H1 (cell line): ENCODE measurements at regions of chr2 and their contacts with region 1.

Region 1: GRCh38 chr2:42047488-42048298 is at the start of gene PKDCC:
- DNase-seq: peak in 1 of 2 experiments; percentile 88
- H3K4me3 ChIP-seq: peak within 1 kb of the TSS; percentile 74 to 95 (median 80)
- H3K27ac ChIP-seq: peak within 1 kb of the TSS; percentile 86
- H3K4me1 ChIP-seq: peaks cover 16 to 50% (median 37%) of the 10 kb centered on the region in 4 experiments
- H3K27me3 ChIP-seq: peaks cover 0 to 12% (median 10%) of the 10 kb centered on the region in 4 experiments; a peak in 5 of 7 replicates
- CTCF ChIP-seq: no peak
- EP300 ChIP-seq: no peak; a peak in 1 of 3 replicates
- POLR2A ChIP-seq: no peak
- RAD21 ChIP-seq: no peak
- total RNA-seq, gene PKDCC: 48.0 and 49.9 TPM in 2 replicates

Region 2: GRCh38 chr2:41914936-41915335 is 132.8 kb before region 1 on chr2:
- CTCF ChIA-PET with region 1: no interaction called
- POLR2A ChIA-PET with region 1: no interaction called
- DNase-seq: no peak
- H3K4me3 ChIP-seq: no peak overlapping the region
- H3K27ac ChIP-seq: no peak overlapping the region
- H3K4me1 ChIP-seq: no peaks in the 10 kb centered on the region; a peak in 1 of 7 replicates
- H3K27me3 ChIP-seq: no peaks in the 10 kb centered on the region
- CTCF ChIP-seq: no peak
- EP300 ChIP-seq: no peak
- POLR2A ChIP-seq: no peak
- RAD21 ChIP-seq: no peak

Region 3: DNA sequence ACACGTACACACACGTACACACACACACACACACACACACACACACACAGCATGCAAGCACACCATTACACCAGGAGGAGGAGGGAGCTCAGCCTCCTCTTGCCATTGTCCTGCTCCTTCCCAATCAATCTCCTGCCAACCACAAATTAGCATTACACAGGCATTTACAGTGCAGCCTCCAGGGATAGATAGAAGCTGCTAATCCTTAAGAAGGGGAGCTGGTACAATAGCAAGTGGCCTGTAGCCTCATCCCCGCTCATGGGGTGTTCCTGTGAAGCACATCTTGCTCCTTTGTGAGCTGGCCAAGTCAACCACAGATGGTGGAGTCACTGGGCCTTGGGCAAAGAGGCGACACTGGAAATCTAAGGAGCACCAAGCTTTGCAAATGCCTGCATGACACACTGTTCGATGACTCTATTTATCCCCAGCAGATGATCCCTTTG is 110.2 kb before region 1 on chr2:
- CTCF ChIA-PET with region 1: interaction called, 4 read pairs
- POLR2A ChIA-PET with region 1: interaction called, 20 read pairs
- DNase-seq: peak in 1 of 2 experiments; percentile 58
- H3K4me3 ChIP-seq: peak overlapping the region in 1 of 4 experiments; percentile 23; a peak in 1 of 8 replicates
- H3K27ac ChIP-seq: peak overlapping the region; percentile 27; the same call in 1 of the 2 replicates
- H3K4me1 ChIP-seq: peaks cover 10 to 33% (median 26%) of the 10 kb centered on the region in 4 experiments
- H3K27me3 ChIP-seq: no peaks in the 10 kb centered on the region; a peak in 1 of 7 replicates
- CTCF ChIP-seq: peak in 2 of 3 experiments; percentile 4 to 19; a peak in 2 of 4 replicates
- EP300 ChIP-seq: no peak
- POLR2A ChIP-seq: no peak
- RAD21 ChIP-seq: peak; percentile 7 to 28; a peak in 3 of 4 replicates

Region 4: DNA sequence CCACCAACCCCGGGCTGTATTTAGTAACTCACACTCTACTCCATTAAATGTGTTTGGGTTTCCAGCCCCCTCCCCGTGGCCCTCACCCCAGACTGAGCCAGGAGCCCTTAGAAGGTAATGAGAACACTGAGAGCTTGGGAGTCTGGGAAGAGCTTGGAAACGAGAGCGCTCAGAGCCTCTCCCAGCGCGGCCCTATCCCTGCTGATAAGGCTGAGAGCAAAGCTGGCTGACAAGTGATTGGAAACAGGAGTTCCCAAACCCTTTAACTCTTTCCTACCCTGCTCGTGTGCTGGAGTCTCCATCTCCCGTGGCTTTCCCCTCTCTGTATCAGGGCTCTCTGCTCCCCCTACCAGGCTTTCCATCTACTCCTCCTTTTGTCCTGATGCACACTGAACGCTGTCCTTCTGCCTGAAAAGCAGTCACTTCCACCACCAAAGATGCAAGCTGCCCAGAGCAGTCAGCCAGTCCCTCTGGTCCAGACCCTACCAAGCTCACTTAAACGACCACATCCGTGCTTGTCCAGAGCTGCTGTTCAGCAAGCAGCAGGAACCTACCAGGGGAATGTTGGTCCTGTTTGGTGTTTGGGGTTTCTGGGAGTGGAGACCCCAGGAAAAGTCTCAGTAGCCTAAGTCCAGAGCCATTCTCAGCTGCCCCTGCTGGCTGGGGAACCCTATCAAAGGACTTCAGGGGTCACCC is 99.8 kb before region 1 on chr2:
- CTCF ChIA-PET with region 1: interaction called, 3 read pairs
- POLR2A ChIA-PET with region 1: interaction called, 13 read pairs
- DNase-seq: peak in 1 of 2 experiments; percentile 66
- H3K4me3 ChIP-seq: peak overlapping the region in 2 of 4 experiments; percentile 24 to 36; a peak in 4 of 8 replicates
- H3K27ac ChIP-seq: peak overlapping the region; percentile 51; the same call in 1 of the 2 replicates
- H3K4me1 ChIP-seq: peaks cover 19 to 31% (median 23%) of the 10 kb centered on the region in 4 experiments; a peak in 6 of 7 replicates
- H3K27me3 ChIP-seq: no peaks in the 10 kb centered on the region
- CTCF ChIP-seq: no peak
- EP300 ChIP-seq: no peak
- POLR2A ChIP-seq: no peak
- RAD21 ChIP-seq: peak in 1 of 2 experiments; percentile 4; a peak in 1 of 4 replicates

Region 5: GRCh38 chr2:42028571-42029148 is 19.0 kb before region 1 on chr2:
- CTCF ChIA-PET with region 1: interaction called, 26 read pairs
- POLR2A ChIA-PET with region 1: interaction called, 46 read pairs
- DNase-seq: no peak
- H3K4me3 ChIP-seq: no peak overlapping the region
- H3K27ac ChIP-seq: no peak overlapping the region
- H3K4me1 ChIP-seq: peaks cover 19 to 42% (median 27%) of the 10 kb centered on the region in 4 experiments
- H3K27me3 ChIP-seq: peaks cover 0 to 12% (median 7%) of the 10 kb centered on the region in 4 experiments; a peak in 3 of 7 replicates
- CTCF ChIP-seq: no peak
- EP300 ChIP-seq: no peak
- POLR2A ChIP-seq: no peak
- RAD21 ChIP-seq: no peak

Region 6: DNA sequence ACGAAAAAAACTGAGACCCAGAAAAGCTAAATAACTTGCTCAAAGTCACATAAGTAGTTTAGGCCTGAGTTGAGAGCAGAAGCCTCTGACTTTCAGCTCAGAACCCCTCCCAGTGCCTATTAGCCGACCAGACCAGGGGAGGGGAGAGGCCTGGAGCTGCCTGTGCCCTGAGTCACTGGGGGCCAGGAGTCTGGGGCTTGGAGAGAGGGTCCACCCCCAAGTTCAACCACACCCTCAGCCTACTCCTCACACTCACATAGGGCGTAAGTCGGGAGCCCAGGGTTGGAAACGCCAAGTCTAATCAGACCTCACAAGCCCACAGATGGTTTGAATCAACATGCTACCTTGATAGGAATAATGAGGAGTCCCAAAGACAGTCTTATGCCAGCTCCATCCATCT is 12.5 kb before region 1 on chr2:
- CTCF ChIA-PET with region 1: interaction called, 31 read pairs
- POLR2A ChIA-PET with region 1: interaction called, 46 read pairs
- DNase-seq: no peak
- H3K4me3 ChIP-seq: no peak overlapping the region
- H3K27ac ChIP-seq: no peak overlapping the region
- H3K4me1 ChIP-seq: peaks cover 9 to 23% (median 18%) of the 10 kb centered on the region in 4 experiments
- H3K27me3 ChIP-seq: peaks cover 0 to 12% (median 6%) of the 10 kb centered on the region in 4 experiments; a peak in 3 of 7 replicates
- CTCF ChIP-seq: no peak
- EP300 ChIP-seq: no peak
- POLR2A ChIP-seq: no peak
- RAD21 ChIP-seq: no peak